ENCODE measurements at regions of chr3 and their contacts with region 1.

Region 1: DNA sequence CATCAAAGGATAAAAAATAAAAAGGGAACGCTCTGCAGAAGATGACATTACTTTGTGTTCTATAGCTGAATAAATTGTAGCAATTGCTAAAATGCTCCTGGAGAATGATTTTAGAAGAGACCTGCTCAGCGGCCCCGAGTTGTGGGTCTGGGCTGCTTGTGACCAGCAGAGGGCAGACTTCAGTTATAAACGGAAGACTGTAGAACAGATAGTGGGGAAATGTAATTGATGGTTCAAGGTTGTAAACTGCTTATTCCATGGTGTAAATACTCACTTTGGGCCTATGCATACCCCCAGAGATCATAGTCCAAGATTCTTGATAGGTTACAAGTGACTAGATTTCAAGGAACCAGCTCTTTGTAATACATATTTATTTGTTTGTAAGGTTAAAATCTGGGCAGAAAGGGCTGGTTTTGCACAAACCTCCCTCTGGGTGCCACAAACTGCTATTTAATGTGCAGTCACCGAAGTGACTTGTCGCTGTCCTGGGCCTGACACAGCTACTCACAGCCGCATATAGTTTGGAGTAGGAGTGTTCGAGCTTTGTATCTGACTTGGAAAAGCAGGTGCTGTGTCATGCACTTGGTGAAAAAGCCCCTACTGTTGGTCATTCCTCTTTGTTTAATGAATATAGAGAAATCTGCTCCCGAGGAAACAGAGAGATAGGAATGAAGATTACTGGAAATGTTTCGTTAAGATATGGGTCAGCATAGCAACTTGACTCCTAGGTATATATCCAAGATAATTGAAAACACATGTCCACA is 34.7 kb upstream of the NDUFB4 start:
- DNase-seq: peak; percentile 73 to 85 (median 77)
- H3K4me3 ChIP-seq: no peak overlapping the region
- H3K27ac ChIP-seq: no peak overlapping the region
- H3K4me1 ChIP-seq: peaks cover 0 to 10% (median 0%) of the 10 kb centered on the region in 3 donors
- H3K27me3 ChIP-seq: no peaks in the 10 kb centered on the region
- CTCF ChIP-seq: peak; percentile 77

Region 2: GRCh38 chr3:120245386-120245785 is 316.0 kb before region 1 on chr3:
- intact Hi-C with region 1: loop called (anchors 2 kb)
- DNase-seq: no peak
- H3K4me3 ChIP-seq: no peak overlapping the region
- H3K27ac ChIP-seq: no peak overlapping the region
- H3K4me1 ChIP-seq: no peaks in the 10 kb centered on the region
- H3K27me3 ChIP-seq: no peaks in the 10 kb centered on the region
- CTCF ChIP-seq: no peak

Region 3: GRCh38 chr3:120795017-120795648 is 233.7 kb after region 1 on chr3:
- intact Hi-C with region 1: loop called (anchors 5 kb)
- DNase-seq: peak; percentile 73 to 86 (median 84)
- H3K4me3 ChIP-seq: no peak overlapping the region
- H3K27ac ChIP-seq: no peak overlapping the region
- H3K4me1 ChIP-seq: no peaks in the 10 kb centered on the region
- H3K27me3 ChIP-seq: no peaks in the 10 kb centered on the region
- CTCF ChIP-seq: peak; percentile 86

Measured in kidney (tissue), 22 donors.